PC-9 (cell line): ENCODE measurements at regions of chr9 and their contacts with region 1.

Region 1: DNA sequence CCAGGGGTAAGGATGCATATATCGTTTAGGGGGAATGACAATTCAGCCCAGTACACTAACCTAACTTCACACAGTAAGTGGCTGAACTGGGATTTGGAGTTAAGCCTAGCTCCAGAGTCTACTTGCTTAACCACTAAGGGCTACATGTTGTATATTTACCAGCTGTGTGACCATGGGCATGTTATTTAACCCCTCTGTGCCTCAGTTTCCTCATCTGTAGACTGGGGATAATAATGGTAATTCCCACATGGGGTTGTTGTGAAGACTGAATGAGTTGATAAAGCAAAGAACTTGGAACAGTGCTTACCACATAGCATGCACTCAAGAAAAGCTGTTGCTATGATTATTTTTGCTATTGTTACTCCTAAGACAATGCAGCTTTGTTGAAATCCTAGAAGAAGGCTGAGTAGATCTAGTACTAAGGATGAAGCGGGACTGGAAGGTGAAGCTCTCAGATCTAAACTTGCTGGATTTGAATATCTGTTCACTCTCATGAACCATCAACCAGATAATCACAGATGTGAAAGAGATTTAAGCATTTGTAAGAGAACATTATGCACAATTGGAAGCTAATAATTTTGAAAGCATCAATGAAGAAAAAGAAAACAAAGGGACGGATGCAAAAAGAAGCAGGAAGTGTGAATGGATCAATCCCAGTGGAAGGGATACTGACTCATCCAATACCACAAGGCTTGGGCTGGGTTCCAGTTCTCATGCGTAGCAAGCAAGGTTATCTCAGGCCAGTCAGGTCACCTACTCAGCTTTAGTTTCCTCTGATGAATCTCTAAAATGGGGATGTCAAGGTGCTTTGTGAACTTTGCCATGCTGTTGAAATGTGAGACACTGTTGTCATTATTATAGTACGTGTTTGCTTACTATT is 78.5 kb upstream of the TBC1D2 start:
- DNase-seq: peak; percentile 52 to 77
- H3K4me3 ChIP-seq: no peak overlapping the region
- H3K27ac ChIP-seq: no peak overlapping the region
- H3K4me1 ChIP-seq: peaks cover 15% of the 10 kb centered on the region
- H3K27me3 ChIP-seq: no peaks in the 10 kb centered on the region
- CTCF ChIP-seq: no peak

Region 2: GRCh38 chr9:98374385-98375051 is 40.6 kb after region 1 on chr9:
- CTCF ChIA-PET with region 1: no interaction called
- POLR2A ChIA-PET with region 1: no interaction called
- intact Hi-C with region 1: loop called (anchors 5 kb)
- DNase-seq: peak; percentile 35 to 88
- H3K4me3 ChIP-seq: no peak overlapping the region
- H3K27ac ChIP-seq: peak overlapping the region; percentile 71
- H3K4me1 ChIP-seq: peaks cover 37% of the 10 kb centered on the region
- H3K27me3 ChIP-seq: no peaks in the 10 kb centered on the region
- CTCF ChIP-seq: no peak

Region 3: DNA sequence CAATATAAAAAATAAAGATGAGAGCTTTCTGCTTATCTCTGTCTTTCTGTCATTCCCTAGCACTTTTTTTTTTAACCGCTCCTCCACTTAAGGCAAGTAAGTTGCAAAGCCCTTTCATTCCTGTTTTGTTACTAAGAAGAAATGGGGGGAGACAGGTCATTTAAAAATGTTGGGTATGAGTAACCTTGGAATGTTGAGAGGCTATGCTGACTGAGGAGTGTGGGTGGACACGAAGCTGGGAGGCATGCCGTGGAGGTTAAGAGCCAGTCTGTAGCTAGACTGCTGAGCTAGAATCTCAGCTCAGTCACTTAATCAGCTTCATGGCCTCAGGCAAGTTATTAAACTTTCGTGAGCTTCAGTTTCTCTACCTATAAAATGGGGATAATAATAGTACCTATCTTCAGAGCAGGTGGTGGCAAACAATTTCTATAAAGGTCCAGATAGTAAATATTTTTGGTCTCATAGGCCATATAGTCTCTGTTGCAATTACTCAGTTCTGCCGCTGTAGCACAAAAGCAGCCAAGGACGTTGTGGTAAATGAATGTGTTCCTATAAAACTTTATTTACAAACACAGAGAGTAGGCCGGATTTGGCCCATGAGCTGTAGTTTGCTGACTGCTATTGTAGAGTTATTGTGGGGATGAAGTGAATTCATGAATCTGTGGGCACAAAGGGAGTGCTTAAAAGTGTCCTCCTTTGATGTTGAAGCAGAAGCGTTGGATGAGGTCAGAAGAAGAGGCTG is 154.8 kb after region 1 on chr9:
- CTCF ChIA-PET with region 1: no interaction called
- POLR2A ChIA-PET with region 1: no interaction called
- intact Hi-C with region 1: loop called (anchors 5 kb)
- DNase-seq: peak; percentile 63 to 94
- H3K4me3 ChIP-seq: no peak overlapping the region
- H3K27ac ChIP-seq: peak overlapping the region; percentile 57
- H3K4me1 ChIP-seq: peaks cover 60% of the 10 kb centered on the region
- H3K27me3 ChIP-seq: no peaks in the 10 kb centered on the region
- CTCF ChIP-seq: no peak

Region 4: GRCh38 chr9:98523231-98523896 is 189.4 kb after region 1 on chr9:
- CTCF ChIA-PET with region 1: interaction called, 11 read pairs
- POLR2A ChIA-PET with region 1: no interaction called
- intact Hi-C with region 1: no loop called
- DNase-seq: peak in 1 of 2 experiments; percentile 16
- H3K4me3 ChIP-seq: no peak overlapping the region
- H3K27ac ChIP-seq: no peak overlapping the region
- H3K4me1 ChIP-seq: no peaks in the 10 kb centered on the region
- H3K27me3 ChIP-seq: no peaks in the 10 kb centered on the region
- CTCF ChIP-seq: peak; percentile 52; the same call in 1 of the 2 replicates